ENCODE measurements at regions of chr16 and their contacts with region 1.

Region 1: DNA sequence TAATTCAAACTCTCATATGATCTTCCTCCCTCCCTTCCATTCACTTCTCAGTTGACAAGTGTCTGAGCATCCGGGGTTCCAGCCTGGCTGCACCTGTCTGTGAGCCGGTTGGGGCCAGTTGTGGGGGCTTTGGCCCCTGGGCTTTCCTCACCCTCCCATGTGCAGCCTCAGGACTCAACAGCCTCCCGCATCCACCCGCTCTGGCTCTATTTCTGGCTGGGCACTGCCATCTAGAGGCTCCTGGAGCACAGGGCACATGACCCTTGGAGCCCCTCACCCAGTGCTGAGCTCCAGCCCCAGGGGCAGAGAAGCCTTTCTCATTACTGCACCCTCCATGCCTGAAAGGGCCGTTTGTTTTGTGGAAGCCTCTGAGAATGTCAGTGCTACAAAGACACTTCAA is 43.3 kb downstream of the HAPSTR1 start:
- DNase-seq: peak; percentile 91
- H3K4me3 ChIP-seq: peak overlapping the region; percentile 18
- H3K27ac ChIP-seq: peak overlapping the region; percentile 62
- H3K4me1 ChIP-seq: peaks cover 45% of the 10 kb centered on the region
- CTCF ChIP-seq: peak; percentile 96

Region 2: DNA sequence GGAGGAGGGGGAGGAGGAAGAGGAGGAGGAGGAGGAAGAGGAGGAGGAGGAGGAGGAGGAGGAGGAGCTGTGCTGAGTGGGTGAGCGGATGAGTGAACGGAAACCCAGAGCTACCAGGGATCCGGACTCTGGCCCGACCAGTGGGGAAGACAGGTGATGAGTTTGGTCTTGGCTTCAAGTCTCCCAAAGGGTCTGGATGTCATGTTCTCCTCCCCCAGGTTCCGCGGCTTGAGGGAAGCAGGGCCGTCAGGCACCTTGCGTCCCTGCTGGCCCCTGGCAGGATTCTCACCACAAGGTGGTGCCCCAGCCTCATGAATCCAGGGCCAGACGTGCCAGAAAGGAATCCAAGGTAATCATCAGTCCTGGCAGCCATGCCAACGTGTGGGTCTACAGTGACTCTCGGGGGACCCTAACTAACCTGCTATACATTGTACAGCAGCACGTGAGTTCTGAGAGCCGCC is 473.9 kb before region 1 on chr16:
- CTCF ChIA-PET with region 1: interaction called, 3 read pairs
- POLR2A ChIA-PET with region 1: no interaction called
- intact Hi-C with region 1: loop called (anchors 2 kb)
- DNase-seq: peak; percentile 59
- H3K4me3 ChIP-seq: no peak overlapping the region
- H3K27ac ChIP-seq: no peak overlapping the region
- H3K4me1 ChIP-seq: no peaks in the 10 kb centered on the region
- CTCF ChIP-seq: peak; percentile 73

Region 3: DNA sequence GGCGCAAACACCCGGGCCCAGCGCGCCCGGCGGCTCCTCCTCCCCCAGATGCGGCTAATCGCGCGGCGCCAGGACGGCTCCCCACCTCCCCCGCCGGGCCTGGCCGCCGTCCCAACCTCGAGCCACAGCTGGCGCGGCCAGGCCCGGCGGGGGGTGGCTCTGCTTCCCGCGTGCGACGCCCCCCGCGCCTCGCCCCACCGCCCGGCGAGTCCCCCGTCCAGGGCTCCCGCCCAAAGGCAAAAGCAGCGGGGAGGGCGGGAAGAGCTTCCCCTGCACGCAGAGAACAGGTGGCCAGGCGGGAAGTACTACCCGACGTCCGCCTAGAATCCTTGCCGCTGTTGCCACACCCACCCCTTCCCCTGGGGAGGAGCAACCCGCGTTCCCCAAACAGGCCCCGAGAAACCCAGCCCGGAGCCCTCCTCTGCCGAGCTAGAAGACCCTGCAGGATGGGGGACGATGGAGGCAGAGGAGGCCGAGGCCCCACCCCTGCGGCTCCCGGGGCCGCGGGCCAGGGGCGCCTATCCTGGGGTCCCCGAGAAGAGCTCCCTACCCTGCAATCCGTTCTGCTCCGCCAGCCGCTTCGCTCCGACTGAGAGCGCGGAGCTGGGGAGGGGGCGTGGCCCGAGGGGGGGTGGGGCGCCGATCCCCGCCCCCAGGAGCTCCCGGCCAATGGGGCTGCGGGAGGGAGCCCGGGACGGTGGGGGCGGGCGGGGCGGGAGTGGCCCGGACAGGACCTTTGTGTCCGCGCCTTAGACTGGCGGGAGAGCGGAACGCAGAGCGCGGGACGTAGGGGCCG is 266.1 kb before region 1 on chr16 and contains the start of gene CARHSP1:
- CTCF ChIA-PET with region 1: no interaction called
- POLR2A ChIA-PET with region 1: no interaction called
- intact Hi-C with region 1: loop called (anchors 5 kb)
- DNase-seq: peak; percentile 94
- H3K4me3 ChIP-seq: peak within 1 kb of the TSS; percentile 92
- H3K27ac ChIP-seq: peak within 1 kb of the TSS; percentile 89
- H3K4me1 ChIP-seq: peaks cover 63% of the 10 kb centered on the region
- CTCF ChIP-seq: no peak
- total RNA-seq, gene CARHSP1: 236 and 241 TPM in 2 replicates

Region 4: GRCh38 chr16:8936421-8936820 is 198.3 kb before region 1 on chr16:
- CTCF ChIA-PET with region 1: no interaction called
- POLR2A ChIA-PET with region 1: no interaction called
- intact Hi-C with region 1: loop called (anchors 1 kb)
- DNase-seq: peak; percentile 66
- H3K4me3 ChIP-seq: no peak overlapping the region
- H3K27ac ChIP-seq: no peak overlapping the region
- H3K4me1 ChIP-seq: peaks cover 10% of the 10 kb centered on the region
- CTCF ChIP-seq: peak; percentile 82

Region 5: DNA sequence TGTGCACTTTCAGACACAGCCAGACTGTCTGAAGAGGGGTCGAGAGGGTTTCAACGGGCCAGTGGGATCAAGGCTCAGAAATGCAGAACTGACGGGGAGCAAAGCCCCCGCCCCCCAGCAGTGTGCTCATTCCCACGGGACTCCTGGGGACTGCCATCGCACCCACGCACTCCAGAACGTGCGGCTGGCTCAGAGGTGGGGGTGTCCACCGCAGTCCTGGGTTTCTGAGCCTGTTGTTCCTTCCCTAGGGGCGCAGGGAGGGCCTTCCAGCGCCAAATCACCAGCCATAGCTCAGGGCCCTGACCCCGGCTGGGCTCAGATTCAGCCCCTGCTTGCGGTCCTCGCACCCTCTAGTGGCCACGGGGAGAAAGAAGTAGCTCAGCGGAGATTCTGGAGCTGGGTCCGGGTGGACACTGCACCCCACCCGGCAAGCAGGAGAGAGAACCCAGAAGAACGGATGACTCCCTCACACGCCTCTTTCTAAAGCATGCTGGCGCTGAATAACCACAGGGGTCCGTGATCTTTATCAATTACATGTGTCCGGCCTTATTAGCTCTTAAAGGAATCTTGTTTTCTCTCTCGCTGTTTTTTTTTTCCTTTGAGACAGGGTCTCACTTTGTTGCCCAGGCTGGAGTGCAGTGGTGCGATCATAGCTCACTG is 126.0 kb before region 1 on chr16:
- CTCF ChIA-PET with region 1: interaction called, 4 read pairs
- POLR2A ChIA-PET with region 1: no interaction called
- intact Hi-C with region 1: loop called (anchors 2 kb)
- DNase-seq: peak; percentile 68
- H3K4me3 ChIP-seq: no peak overlapping the region
- H3K27ac ChIP-seq: no peak overlapping the region
- H3K4me1 ChIP-seq: no peaks in the 10 kb centered on the region
- CTCF ChIP-seq: peak; percentile 86

Region 6: GRCh38 chr16:9039210-9039609 is 95.5 kb before region 1 on chr16:
- CTCF ChIA-PET with region 1: no interaction called
- POLR2A ChIA-PET with region 1: no interaction called
- intact Hi-C with region 1: no loop called
- DNase-seq: peak; percentile 13
- H3K4me3 ChIP-seq: no peak overlapping the region
- H3K27ac ChIP-seq: no peak overlapping the region
- H3K4me1 ChIP-seq: no peaks in the 10 kb centered on the region
- CTCF ChIP-seq: no peak

Region 7: GRCh38 chr16:9109255-9109654 is 25.5 kb before region 1 on chr16:
- CTCF ChIA-PET with region 1: no interaction called
- POLR2A ChIA-PET with region 1: no interaction called
- intact Hi-C with region 1: no loop called
- DNase-seq: no peak
- H3K4me3 ChIP-seq: no peak overlapping the region
- H3K27ac ChIP-seq: no peak overlapping the region
- H3K4me1 ChIP-seq: peaks cover 4% of the 10 kb centered on the region
- CTCF ChIP-seq: no peak

Region 8: DNA sequence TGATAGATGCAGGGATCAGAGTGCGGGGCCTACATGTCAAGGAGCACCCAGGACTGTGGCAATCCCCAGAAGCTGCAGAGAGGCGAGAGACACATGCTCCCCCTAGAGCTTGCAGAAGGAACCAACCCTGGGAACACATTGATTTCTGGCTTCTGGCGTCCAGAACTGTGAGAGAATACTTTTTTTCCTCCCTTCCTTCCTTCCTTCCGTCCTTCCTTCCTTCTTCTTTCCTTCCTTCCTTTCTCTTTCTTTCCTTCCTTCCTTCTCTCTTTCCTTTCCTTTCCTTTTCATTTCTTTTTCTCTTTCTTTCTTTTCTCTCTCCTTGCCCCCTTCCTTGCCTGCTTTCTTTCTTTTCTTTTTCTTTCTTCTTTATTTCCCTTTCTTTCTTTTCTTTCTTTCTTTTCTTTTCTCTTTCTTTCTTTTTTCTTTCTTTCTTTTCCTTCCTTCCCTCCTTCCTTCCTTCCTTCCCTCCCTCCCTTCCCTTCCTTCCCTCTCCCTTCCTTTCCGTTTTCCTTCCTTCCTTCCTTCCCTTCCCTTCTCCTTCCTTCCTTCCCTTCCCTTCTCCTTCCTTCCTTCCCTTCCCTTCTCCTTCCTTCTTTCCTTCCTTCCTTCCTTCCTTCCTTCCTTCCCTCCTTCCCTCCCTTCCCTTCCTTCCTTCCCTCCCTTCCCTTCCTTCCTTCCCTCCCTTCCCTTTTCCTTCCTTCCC is 91.0 kb after region 1 on chr16:
- CTCF ChIA-PET with region 1: no interaction called
- POLR2A ChIA-PET with region 1: no interaction called
- intact Hi-C with region 1: loop called (anchors 1 kb)
- DNase-seq: peak; percentile 39
- H3K4me3 ChIP-seq: no peak overlapping the region
- H3K27ac ChIP-seq: no peak overlapping the region
- H3K4me1 ChIP-seq: no peaks in the 10 kb centered on the region
- CTCF ChIP-seq: peak; percentile 64

Region 9: DNA sequence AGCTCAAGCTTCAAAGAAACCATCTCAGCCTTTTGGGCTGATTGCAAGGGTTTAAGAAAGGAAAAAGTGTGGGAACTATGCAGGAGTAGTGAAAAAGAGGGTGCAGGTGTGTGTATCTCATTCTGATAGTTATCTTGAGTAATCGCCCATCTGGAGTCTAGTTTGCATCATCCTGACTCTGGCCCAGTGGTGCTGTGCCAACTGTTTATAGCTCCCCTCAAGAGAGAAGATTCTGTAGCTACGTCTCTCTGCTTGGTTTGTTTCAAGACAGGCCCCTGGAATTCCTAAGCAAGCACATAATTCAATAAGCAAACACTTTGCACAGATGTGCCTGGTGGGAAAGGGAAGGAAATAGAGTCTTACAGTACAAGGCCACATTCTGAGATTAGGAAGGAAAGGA is 101.1 kb after region 1 on chr16:
- CTCF ChIA-PET with region 1: no interaction called
- POLR2A ChIA-PET with region 1: no interaction called
- intact Hi-C with region 1: no loop called
- DNase-seq: no peak
- H3K4me3 ChIP-seq: no peak overlapping the region
- H3K27ac ChIP-seq: no peak overlapping the region
- H3K4me1 ChIP-seq: no peaks in the 10 kb centered on the region
- CTCF ChIP-seq: no peak

Region 10: DNA sequence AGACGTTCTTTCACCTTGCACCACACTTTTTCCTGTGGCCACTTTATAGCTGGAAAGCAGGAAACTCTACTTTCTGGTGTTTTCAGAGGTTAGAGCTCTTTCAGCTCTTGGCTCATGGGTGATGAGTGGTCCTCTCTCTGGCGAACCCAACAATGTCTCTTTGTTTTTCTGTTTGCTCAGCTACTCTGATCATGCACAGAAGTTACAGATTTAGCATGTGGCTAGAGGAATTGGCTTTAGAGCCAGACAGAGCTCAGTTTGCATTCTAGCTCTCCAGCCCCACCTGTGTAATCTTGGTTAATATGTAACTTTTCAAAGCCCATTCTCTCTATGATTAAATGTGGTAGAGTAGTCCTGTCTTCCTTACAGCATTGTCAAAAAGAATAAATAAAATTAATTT is 181.9 kb after region 1 on chr16:
- CTCF ChIA-PET with region 1: no interaction called
- POLR2A ChIA-PET with region 1: no interaction called
- intact Hi-C with region 1: no loop called
- DNase-seq: no peak
- H3K4me3 ChIP-seq: no peak overlapping the region
- H3K27ac ChIP-seq: no peak overlapping the region
- H3K4me1 ChIP-seq: no peaks in the 10 kb centered on the region
- CTCF ChIP-seq: no peak

Measured in OCI-LY7 (cell line).